ENCODE measurements at regions of chr2 and their contacts with region 1.

Region 1: DNA sequence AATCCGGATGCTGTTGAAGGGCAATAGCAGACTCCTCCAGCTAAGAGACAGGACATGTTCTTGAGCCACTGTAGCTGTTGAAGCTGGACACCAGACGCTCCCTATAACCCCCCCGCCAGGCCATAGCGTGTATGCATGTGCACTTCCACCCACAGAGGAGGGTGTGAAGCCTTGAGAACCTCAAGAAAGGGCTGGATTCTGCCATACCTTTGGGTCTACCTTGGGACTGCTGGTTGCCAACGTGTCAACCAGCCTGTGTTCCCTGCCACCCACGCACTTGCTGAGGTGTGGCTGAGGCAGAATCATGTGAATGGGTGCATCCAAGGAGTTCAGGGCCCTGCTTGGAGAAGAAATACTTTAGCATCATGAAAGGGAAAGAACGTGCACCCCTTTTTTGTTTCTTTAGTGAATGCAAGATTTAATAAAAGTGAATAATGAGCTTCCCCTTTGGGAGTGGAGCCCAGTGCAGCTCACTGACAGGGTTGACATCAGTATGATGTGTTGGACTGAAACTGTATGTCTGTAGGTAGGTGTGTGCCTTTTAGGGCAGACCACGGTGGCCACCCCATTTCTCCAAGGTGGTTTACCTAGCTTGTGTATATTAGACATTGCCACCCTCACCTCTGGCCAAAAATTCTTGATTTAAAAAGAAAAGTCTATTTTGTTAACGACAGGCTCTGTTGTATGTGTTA is 198.3 kb downstream of the MGAT5 start:
- DNase-seq: no peak

Region 2: DNA sequence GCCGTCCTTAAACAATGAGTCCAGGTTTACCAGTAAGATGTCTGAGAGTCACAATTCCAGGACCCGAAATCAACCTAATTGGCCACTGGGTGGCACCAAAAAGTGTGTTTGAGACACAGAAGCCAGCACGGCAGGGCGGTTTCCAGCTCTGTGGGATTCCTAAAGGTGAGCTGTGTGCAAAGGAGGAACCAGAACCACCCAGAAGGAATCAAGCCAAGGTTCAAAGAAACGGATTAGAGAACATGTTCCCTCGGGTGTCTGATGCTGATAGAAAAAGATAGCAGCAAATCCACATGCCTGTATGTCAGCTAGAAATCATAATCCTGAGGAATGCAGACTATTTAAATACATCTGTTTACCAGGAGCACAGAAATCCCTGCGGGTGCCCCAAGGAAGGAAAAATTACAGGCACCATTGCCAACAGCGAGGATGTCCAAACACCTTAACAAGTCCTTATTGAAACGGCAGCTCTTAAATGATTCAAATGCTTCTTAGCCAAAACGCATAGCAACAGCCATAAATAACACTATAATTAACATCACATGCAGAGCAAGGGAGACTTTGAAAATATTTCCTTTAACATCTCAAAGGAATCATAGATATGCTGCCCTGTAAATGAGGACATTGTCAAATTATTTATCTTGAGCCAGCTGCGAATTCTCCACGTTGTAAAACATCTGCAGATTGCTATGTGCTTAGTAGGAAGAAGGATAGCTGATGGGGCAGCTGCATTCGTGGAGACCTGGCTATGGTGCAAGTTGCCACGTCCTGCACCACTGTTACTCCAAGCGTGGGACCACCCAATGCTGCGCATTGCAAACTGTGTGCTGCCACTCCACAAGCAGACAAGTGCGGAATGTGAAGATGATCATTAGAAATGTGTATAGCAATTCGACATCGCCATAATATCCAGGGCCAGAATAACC is 565.2 kb before region 1 on chr2:
- CTCF ChIA-PET with region 1: interaction called, 11 read pairs
- POLR2A ChIA-PET with region 1: no interaction called
- DNase-seq: peak; percentile 75

Region 3: DNA sequence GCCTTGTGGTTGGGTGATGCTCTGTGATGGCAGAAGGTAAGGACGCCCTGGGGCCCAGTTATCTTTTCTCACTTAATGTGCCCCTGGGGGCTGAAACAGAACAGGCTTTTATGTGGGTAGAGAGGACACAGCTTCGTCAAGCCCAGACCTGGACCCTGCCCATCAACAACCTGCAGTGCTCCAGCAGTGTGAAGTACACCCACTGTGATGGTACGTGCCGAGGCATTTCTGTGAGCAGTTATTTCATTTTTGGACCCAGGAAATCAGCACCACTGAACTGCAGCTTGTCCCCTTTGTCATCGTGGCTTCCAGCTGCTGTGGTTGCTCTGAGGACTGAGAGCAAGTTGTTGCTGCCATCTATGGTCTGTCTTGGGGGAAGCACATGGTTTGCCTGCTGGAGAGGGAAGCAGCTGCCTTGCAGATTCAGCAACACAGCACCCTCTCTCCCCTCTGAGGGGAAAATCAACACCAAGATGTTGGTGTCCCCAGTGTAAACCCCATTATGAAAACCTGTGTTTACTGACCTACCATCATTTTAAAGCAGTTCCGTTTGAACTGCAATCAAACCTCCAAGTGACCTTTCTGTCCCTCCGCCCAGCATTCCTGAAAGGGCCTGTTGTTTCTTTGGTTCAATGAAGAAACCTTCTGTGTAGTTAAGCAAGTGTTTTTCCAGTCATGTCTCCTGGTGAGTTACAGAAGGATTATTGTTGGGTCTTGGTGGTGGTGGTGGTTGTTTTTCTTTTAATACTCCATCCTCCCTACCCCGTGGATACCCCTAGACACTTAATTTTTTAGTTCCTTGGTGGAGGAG is 40.2 kb before region 1 on chr2:
- CTCF ChIA-PET with region 1: no interaction called
- POLR2A ChIA-PET with region 1: no interaction called
- DNase-seq: peak; percentile 70

Region 4: GRCh38 chr2:134436706-134437105 is 15.5 kb before region 1 on chr2:
- CTCF ChIA-PET with region 1: interaction called, 15 read pairs
- POLR2A ChIA-PET with region 1: no interaction called
- DNase-seq: no peak